ENCODE measurements at regions of chr18 and their contacts with region 1.

Region 1: DNA sequence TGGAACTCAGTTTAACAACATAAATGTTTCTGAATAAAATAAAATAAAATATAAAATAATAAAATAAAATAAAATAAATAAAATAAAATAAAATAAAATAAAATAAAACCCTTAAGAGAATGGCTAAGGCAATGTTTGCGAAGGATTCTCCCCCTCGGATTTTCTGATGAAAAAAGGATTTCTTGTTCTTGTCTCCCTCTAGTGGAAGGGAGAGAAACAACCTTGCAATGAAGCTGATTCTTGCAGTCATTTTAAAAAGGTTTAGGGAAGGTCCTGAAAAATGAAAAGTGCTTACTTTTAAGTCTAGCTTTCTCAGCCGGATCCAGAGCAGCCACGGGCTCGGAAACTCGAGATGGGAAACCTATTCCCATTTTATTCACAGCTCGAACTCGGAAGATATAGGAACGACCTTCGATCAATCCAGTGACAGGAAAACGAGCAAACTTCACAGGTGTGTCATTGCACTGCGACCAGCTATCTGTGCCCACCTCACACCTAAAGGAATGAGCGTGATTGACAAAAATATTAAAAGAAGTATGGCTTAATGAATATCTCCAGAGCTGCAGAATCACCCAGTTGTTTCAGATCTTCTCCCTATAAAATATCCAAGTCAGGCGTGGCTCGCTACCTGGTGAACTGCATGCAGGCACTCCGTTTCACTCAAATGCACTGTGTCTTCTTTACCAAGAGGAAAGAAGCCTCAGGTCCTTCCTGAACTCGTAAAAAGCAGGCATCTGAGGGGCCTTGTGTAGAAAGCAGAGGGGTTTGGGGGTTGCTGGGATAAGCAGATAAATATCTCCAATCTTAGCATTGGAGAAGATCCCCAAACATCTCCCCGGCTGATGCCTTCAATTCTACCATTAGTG is 68.1 kb downstream of the MYOM1 start:
- DNase-seq: no peak
- H3K4me3 ChIP-seq: no peak overlapping the region
- H3K27ac ChIP-seq: no peak overlapping the region
- H3K27me3 ChIP-seq: peaks cover 3% of the 10 kb centered on the region
- CTCF ChIP-seq: peak; percentile 79

Region 2: DNA sequence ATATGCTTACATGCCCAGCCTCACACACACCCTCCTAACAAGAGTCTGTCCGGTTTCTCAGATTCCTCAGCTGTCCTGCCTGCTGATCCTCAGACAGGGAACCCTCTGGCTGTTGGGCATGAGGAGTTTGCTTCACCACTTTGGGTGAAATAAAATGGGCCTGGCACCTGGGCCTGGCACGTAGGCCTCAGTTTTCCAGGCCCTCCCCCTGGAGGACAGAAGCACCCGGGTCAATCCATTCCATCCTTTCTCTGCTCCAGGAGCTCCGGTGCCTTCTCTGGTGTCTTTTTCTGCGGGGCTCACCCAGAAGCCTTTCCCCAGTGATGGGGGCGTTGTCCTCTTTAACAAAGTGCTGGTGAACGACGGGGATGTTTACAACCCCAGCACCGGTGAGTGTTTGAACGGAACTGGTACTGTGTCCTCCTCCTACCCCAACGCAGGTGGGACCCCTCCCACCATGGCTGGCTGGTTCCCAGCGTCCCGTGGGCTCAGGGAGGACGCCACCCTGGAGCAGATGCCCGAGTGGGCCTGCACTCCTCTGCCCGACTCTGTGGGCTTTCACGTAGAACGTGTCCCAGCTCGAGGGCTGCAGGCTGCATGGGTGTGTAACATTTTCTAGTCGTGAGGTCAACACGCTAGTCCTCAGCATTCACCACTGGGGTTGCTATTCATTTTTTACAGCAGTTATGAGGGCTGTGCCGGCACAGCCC is 242.0 kb before region 1 on chr18:
- CTCF ChIA-PET with region 1: no interaction called
- POLR2A ChIA-PET with region 1: no interaction called
- DNase-seq: no peak
- H3K4me3 ChIP-seq: no peak overlapping the region
- H3K27ac ChIP-seq: no peak overlapping the region
- H3K27me3 ChIP-seq: peaks cover 17% of the 10 kb centered on the region
- CTCF ChIP-seq: no peak

Region 3: GRCh38 chr18:2932247-2933181 is 219.1 kb before region 1 on chr18:
- CTCF ChIA-PET with region 1: interaction called, 14 read pairs
- POLR2A ChIA-PET with region 1: no interaction called
- DNase-seq: peak; percentile 21
- H3K4me3 ChIP-seq: no peak overlapping the region
- H3K27ac ChIP-seq: no peak overlapping the region
- H3K27me3 ChIP-seq: no peaks in the 10 kb centered on the region
- CTCF ChIP-seq: peak; percentile 64

Region 4: GRCh38 chr18:2948038-2948437 is 203.6 kb before region 1 on chr18:
- CTCF ChIA-PET with region 1: interaction called, 11 read pairs
- POLR2A ChIA-PET with region 1: no interaction called
- DNase-seq: no peak
- H3K4me3 ChIP-seq: no peak overlapping the region
- H3K27ac ChIP-seq: no peak overlapping the region
- H3K27me3 ChIP-seq: no peaks in the 10 kb centered on the region
- CTCF ChIP-seq: peak; percentile 56

Region 5: DNA sequence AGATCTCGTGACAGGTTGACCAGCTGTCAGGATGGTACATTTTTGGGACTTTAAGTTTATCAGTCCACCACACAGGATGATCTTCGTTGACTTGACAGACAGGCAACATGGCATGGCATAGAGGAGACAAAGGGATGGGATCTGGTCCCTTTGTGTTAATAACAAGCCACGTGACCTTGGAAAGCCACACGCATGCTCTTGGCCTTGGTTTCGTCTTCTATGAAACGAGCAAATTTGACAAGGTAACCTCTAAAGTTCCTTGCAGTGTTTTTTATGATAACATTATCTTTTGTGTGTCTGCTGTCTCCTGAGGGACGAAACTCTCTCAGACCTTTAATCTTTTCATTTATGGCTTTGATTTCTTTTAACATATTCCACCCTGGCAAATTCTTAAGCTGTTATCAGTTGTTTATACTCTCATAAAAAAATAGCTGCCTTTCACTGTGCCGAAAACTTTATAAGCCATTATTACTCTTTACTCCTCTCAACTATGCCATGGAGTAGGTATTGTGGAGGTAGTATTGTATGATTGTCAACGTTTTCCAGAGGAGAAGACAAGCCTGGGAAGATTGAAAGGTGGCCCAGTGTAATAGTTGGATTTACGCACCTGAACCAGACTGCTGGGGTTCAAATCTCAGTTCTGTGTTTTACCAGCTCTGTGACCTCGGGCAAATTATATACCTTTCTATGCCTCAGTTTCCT is 13.2 kb before region 1 on chr18:
- CTCF ChIA-PET with region 1: interaction called, 10 read pairs
- POLR2A ChIA-PET with region 1: no interaction called
- DNase-seq: no peak
- H3K4me3 ChIP-seq: no peak overlapping the region
- H3K27ac ChIP-seq: no peak overlapping the region
- H3K27me3 ChIP-seq: peaks cover 18% of the 10 kb centered on the region
- CTCF ChIP-seq: no peak

Region 6: DNA sequence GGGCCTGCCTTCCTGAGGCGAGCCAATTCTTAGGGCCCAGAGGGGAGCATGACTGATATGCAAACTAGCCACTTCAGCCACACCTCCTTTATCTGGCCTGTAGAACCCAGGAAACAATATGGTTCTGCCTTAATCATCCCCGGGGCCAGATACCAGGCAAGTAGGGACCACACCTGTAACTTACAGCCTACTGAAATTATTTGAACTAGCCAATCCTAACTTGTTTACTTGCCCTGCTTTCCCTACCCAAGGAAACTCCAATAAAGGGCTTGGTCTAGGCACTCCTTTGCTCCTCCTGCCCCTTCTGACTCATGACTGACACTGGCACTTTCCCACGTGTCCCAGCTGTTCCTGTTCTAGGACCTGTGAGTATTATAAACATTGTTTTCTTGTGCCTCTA is 10.5 kb after region 1 on chr18:
- CTCF ChIA-PET with region 1: interaction called, 11 read pairs
- POLR2A ChIA-PET with region 1: no interaction called
- DNase-seq: no peak
- H3K4me3 ChIP-seq: no peak overlapping the region
- H3K27ac ChIP-seq: no peak overlapping the region
- H3K27me3 ChIP-seq: peaks cover 5% of the 10 kb centered on the region
- CTCF ChIP-seq: no peak

Region 7: DNA sequence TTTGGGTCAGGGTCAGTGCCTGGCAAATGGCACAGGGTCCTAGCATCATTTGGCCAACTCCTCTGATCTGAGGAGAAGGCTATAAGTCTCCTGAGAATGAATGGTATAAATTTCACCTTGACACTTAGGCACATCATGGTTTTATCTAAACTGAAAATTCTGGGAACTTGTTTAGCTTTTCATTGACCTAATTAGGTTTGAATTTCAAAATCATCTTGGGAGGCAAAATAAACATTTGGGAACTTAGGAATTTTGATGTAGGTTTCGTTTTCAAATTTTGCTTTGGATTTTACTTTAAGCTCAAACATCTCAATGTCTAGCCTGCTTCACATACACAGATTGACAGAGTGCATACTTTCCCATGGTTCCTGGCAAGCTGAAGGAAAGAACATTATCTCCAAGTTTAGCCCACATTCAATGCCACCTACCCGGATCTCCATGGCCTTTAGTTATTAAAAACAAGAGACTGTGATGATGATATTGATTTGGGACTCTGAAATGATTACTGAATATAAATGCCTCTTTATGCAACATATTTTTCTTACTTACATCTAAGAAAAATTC is 23.6 kb after region 1 on chr18:
- CTCF ChIA-PET with region 1: interaction called, 11 read pairs
- POLR2A ChIA-PET with region 1: no interaction called
- DNase-seq: no peak
- H3K4me3 ChIP-seq: no peak overlapping the region
- H3K27ac ChIP-seq: no peak overlapping the region
- H3K27me3 ChIP-seq: peaks cover 6% of the 10 kb centered on the region
- CTCF ChIP-seq: no peak

Region 8: DNA sequence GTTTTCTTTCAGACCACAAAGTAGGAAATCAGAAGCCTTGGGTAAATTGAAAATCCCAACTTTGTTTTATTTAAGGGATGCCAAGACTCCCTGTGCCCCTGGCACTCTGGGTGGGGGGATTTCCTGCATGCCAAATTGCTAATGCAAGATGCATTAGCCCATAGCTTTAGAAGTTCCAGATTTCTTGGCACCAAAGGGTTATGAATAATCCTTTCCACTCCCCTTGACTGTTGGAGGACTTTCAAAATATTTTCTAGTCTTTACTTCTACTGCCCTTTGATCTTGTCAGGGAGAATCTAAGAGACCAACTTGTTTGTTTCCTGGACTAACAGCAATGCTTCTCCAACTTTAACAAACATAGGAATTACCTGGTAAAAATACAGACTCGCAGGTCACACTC is 216.6 kb after region 1 on chr18:
- CTCF ChIA-PET with region 1: no interaction called
- POLR2A ChIA-PET with region 1: no interaction called
- DNase-seq: no peak
- H3K4me3 ChIP-seq: no peak overlapping the region
- H3K27ac ChIP-seq: no peak overlapping the region
- H3K27me3 ChIP-seq: peaks cover 3% of the 10 kb centered on the region
- CTCF ChIP-seq: no peak